HCT116 (cell line): ENCODE measurements at regions of chr14 and their contacts with region 1.

Region 1: GRCh38 chr14:74217672-74218448 is 21.4 kb upstream of the VSX2 start:
- DNase-seq: peak; percentile 47
- ATAC-seq: peak; percentile 98
- H3K4me3 ChIP-seq: peak overlapping the region; percentile 31 to 53
- H3K27ac ChIP-seq: no peak overlapping the region
- H3K4me1 ChIP-seq: peaks cover 0 to 11% of the 10 kb centered on the region in 2 experiments; a peak in 1 of 4 replicates
- H3K27me3 ChIP-seq: no peaks in the 10 kb centered on the region
- CTCF ChIP-seq: peak; percentile 81 to 96 (median 88)
- POLR2A ChIP-seq: no peak
- RAD21 ChIP-seq: peak; percentile 63

Region 2: GRCh38 chr14:74249433-74250375 is 31.8 kb after region 1 on chr14:
- CTCF ChIA-PET with region 1: no interaction called
- POLR2A ChIA-PET with region 1: no interaction called
- RAD21 ChIA-PET with region 1: no interaction called
- intact Hi-C with region 1: loop called (anchors 5 kb)
- DNase-seq: no peak
- ATAC-seq: no peak
- H3K4me3 ChIP-seq: no peak overlapping the region
- H3K27ac ChIP-seq: no peak overlapping the region
- H3K4me1 ChIP-seq: peaks cover 2 to 9% of the 10 kb centered on the region in 2 experiments; a peak in 2 of 4 replicates
- H3K27me3 ChIP-seq: no peaks in the 10 kb centered on the region
- CTCF ChIP-seq: no peak
- POLR2A ChIP-seq: no peak
- RAD21 ChIP-seq: no peak

Region 3: DNA sequence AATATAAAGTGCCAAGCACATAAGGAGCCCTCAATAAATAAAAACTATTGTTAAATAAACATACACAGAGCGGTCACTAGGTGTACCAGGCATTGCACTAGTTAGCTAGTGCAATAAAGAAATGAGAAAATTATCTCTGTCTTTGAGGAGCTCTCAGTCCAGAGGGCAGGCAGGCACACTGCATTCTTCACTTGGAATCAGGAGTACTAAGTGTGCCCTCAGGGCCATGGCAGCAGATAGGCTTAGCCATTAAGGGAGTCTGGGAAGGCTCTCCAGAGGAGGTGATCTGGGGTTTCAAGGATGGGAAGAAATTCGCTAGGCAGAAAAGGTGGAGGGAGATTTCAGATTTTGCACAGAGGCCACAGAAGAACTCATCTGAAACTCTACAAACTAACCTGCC is 75.7 kb after region 1 on chr14:
- CTCF ChIA-PET with region 1: no interaction called
- POLR2A ChIA-PET with region 1: no interaction called
- RAD21 ChIA-PET with region 1: no interaction called
- intact Hi-C with region 1: loop called (anchors 2 kb)
- DNase-seq: no peak
- ATAC-seq: no peak
- H3K4me3 ChIP-seq: no peak overlapping the region
- H3K27ac ChIP-seq: no peak overlapping the region
- H3K4me1 ChIP-seq: peaks cover under 1 to 18% of the 10 kb centered on the region in 2 experiments; a peak in 3 of 4 replicates
- H3K27me3 ChIP-seq: no peaks in the 10 kb centered on the region
- CTCF ChIP-seq: no peak
- POLR2A ChIP-seq: no peak
- RAD21 ChIP-seq: no peak